MCF 10A (cell line): ENCODE measurements at regions of chr11 and their contacts with region 1.

Region 1: GRCh38 chr11:11265994-11266606 is 87.0 kb downstream of the CSNK2A3 start:
- DNase-seq: peak; percentile 62
- H3K4me3 Mint-ChIP-seq: no peak overlapping the region
- H3K27ac Mint-ChIP-seq: no peak overlapping the region
- H3K4me1 Mint-ChIP-seq: peaks cover 9% of the 10 kb centered on the region
- H3K27me3 Mint-ChIP-seq: no peaks in the 10 kb centered on the region
- CTCF ChIP-seq: peak; percentile 84

Region 2: DNA sequence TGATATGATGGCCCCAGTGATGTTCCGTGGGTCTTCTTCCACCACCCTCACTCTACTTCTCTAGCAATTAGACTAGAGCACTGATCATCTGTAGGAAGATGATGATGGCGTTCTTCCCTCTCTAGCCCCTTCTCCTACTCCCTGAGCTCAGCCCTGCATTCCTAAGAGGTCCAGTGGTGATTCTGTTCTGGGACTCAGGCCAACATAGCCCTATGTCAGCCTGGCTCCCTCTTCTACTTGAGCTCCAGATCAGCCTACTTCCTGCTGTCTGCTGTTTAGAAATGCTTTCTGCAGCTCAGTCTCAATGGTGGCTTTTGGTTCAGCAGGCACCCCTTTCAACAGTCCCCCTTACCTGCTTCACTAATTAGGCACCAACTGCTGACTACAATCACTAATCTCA is 322.1 kb before region 1 on chr11:
- CTCF ChIA-PET with region 1: no interaction called
- POLR2A ChIA-PET with region 1: no interaction called
- intact Hi-C with region 1: loop called (anchors 10 kb)
- DNase-seq: no peak
- H3K4me3 Mint-ChIP-seq: no peak overlapping the region
- H3K27ac Mint-ChIP-seq: no peak overlapping the region
- H3K4me1 Mint-ChIP-seq: peaks cover 6% of the 10 kb centered on the region
- H3K27me3 Mint-ChIP-seq: peaks cover under 1% of the 10 kb centered on the region
- CTCF ChIP-seq: no peak

Region 3: DNA sequence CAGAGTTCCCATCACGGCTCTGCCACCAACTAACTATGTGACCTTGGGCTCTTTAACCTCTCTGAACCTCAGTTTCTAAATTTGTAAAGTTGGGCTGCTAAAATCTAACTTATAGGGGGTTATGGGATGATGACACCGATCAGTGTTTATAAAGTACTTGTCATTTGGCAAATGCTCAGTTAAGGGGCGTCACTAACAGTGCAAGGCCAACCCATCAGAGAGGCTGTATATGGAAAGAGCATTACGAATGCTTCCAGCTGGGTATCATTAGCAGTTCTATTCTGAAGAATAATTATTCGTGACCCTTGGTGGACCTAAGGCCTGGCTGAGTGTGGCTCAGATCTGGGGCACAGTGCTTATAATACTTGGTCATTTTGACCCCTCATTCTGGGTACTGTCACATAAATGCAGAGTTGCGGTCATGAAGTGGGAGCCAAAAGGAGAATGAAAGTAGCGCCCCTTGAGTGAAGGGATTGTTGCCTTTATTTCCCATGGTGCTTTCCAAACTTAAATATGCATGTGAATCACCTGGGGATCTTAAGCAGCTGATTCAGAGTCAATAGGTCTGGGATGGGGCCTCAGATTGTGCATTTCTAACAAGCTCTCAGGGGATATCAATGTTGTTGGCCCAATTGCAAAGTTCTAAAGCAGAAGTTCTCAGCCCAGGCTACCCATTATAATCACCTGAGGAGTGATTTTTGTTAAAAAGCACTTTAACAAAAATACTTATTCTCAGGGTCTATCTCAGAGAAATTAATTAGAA is 28.8 kb before region 1 on chr11:
- CTCF ChIA-PET with region 1: no interaction called
- POLR2A ChIA-PET with region 1: no interaction called
- intact Hi-C with region 1: no loop called
- DNase-seq: no peak
- H3K4me3 Mint-ChIP-seq: no peak overlapping the region
- H3K27ac Mint-ChIP-seq: no peak overlapping the region
- H3K4me1 Mint-ChIP-seq: no peaks in the 10 kb centered on the region
- H3K27me3 Mint-ChIP-seq: no peaks in the 10 kb centered on the region
- CTCF ChIP-seq: no peak